AG04449 (cell line): ENCODE measurements at regions of chr14 and their contacts with region 1.

Region 1: GRCh38 chr14:92783816-92784431 is 10.2 kb upstream of the GOLGA5 start:
- DNase-seq: no peak
- H3K4me3 ChIP-seq: no peak overlapping the region
- CTCF ChIP-seq: peak; percentile 39

Region 2: GRCh38 chr14:92135267-92135666 is 648.7 kb before region 1 on chr14:
- CTCF ChIA-PET with region 1: interaction called, 21 read pairs
- POLR2A ChIA-PET with region 1: no interaction called
- DNase-seq: no peak
- H3K4me3 ChIP-seq: no peak overlapping the region
- CTCF ChIP-seq: peak; percentile 33

Region 3: DNA sequence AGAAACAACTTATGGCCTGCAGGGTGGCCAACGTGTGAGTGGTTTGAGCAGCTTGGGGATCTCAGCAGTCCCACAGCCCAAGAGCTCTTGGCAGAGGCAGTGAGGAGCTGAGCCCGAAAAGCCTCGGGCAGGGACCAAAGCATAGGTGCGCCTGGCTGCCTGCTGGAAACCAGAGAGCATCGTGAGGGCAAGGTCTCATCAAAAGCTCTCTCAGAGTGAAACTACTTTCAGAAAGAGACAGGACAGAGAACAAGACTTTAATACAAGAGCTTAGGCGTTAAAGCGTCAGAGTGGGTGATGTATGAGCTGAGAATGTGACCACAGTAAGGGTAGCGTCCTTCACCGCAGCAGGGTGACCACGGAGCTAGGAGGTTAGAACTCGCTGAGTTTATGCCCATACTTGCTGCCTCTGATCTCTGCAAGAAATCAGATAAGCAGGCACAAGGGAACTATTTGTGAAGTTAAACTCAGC is 66.3 kb before region 1 on chr14:
- CTCF ChIA-PET with region 1: interaction called, 170 read pairs
- POLR2A ChIA-PET with region 1: no interaction called
- DNase-seq: no peak
- H3K4me3 ChIP-seq: no peak overlapping the region
- CTCF ChIP-seq: no peak

Region 4: GRCh38 chr14:92748259-92749016 is 35.5 kb before region 1 on chr14 and contains the start of gene LGMN:
- CTCF ChIA-PET with region 1: interaction called, 12 read pairs
- POLR2A ChIA-PET with region 1: interaction called, 8 read pairs
- DNase-seq: peak; percentile 66
- H3K4me3 ChIP-seq: peak within 1 kb of the TSS; percentile 85
- CTCF ChIP-seq: no peak

Region 5: DNA sequence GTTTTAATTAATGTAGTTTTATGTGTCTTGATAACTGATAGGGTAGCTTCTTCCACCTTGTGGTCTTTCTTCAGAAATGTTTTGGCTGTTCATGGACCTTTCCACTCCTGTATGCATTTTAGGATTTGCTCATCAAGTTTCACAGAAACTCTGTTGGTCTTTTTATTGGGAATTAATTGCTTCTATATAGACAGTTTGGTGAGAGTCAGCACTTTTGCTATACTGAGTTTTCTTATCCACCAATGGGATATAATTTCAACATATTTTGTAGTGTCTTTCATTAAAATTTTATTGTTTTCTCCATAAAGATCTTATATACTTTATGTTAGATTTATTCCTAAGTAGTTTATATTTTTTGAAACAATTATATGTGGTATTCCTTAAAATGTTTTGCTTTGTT is 18.0 kb after region 1 on chr14:
- CTCF ChIA-PET with region 1: no interaction called
- POLR2A ChIA-PET with region 1: no interaction called
- DNase-seq: no peak
- H3K4me3 ChIP-seq: no peak overlapping the region
- CTCF ChIP-seq: no peak